Lower leg skin (tissue), 4 donors: ENCODE measurements at regions of chr2 and their contacts with region 1.

Region 1: GRCh38 chr2:88669371-88670214 is 21.9 kb upstream of the RPIA start:
- DNase-seq: no peak
- H3K4me3 ChIP-seq: no peak overlapping the region
- CTCF ChIP-seq: no peak
- POLR2A ChIP-seq: no peak

Region 2: GRCh38 chr2:88590998-88591613 is 78.5 kb before region 1 on chr2:
- intact Hi-C with region 1: loop called (anchors 5 kb)
- DNase-seq: peak in 1 of 2 donors; percentile 56
- H3K4me3 ChIP-seq: no peak overlapping the region
- CTCF ChIP-seq: peak in 1 of 3 donors; percentile 25
- POLR2A ChIP-seq: no peak